ENCODE measurements at regions of chr3 and their contacts with region 1.

Region 1: GRCh38 chr3:48918388-48919214 is at the start of gene ARIH2:
- DNase-seq: peak; percentile 85
- H3K4me3 Mint-ChIP-seq: peak within 1 kb of the TSS; percentile 90
- H3K27ac Mint-ChIP-seq: peak within 1 kb of the TSS; percentile 98
- H3K4me1 Mint-ChIP-seq: peaks cover 23% of the 10 kb centered on the region
- H3K27me3 Mint-ChIP-seq: no peaks in the 10 kb centered on the region
- total RNA-seq, gene ARIH2: 156 and 163 TPM in 2 replicates

Region 2: GRCh38 chr3:48663415-48664312 is 254.9 kb before region 1 on chr3:
- intact Hi-C with region 1: loop called (anchors 5 kb)
- DNase-seq: peak; percentile 94
- H3K4me3 Mint-ChIP-seq: peak overlapping the region; percentile 90
- H3K27ac Mint-ChIP-seq: peak overlapping the region; percentile 99
- H3K4me1 Mint-ChIP-seq: peaks cover 10% of the 10 kb centered on the region
- H3K27me3 Mint-ChIP-seq: peaks cover 8% of the 10 kb centered on the region

Region 3: GRCh38 chr3:48716982-48717746 is 201.4 kb before region 1 on chr3 and contains the start of gene IP6K2:
- intact Hi-C with region 1: loop called (anchors 2 kb)
- DNase-seq: peak; percentile 98
- H3K4me3 Mint-ChIP-seq: peak within 1 kb of the TSS; percentile 98
- H3K27ac Mint-ChIP-seq: peak within 1 kb of the TSS; percentile 97
- H3K4me1 Mint-ChIP-seq: peaks cover 28% of the 10 kb centered on the region
- H3K27me3 Mint-ChIP-seq: peaks cover 13% of the 10 kb centered on the region
- total RNA-seq, gene IP6K2: 65.4 and 68.2 TPM in 2 replicates

Region 4: GRCh38 chr3:48898383-48899234 is 20.0 kb before region 1 on chr3 and contains the start of gene SLC25A20:
- intact Hi-C with region 1: loop called (anchors 1 kb)
- DNase-seq: peak; percentile 89
- H3K4me3 Mint-ChIP-seq: peak within 1 kb of the TSS; percentile 90
- H3K27ac Mint-ChIP-seq: peak within 1 kb of the TSS; percentile 94
- H3K4me1 Mint-ChIP-seq: peaks cover 33% of the 10 kb centered on the region
- H3K27me3 Mint-ChIP-seq: no peaks in the 10 kb centered on the region
- total RNA-seq, gene SLC25A20: 16.2 and 19.0 TPM in 2 replicates

Region 5: GRCh38 chr3:48989796-48990635 is 71.4 kb after region 1 on chr3 and contains the start of gene P4HTM:
- intact Hi-C with region 1: loop called (anchors 5 kb)
- DNase-seq: peak; percentile 64
- H3K4me3 Mint-ChIP-seq: peak within 1 kb of the TSS; percentile 93
- H3K27ac Mint-ChIP-seq: peak within 1 kb of the TSS; percentile 88
- H3K4me1 Mint-ChIP-seq: peaks cover 37% of the 10 kb centered on the region
- H3K27me3 Mint-ChIP-seq: no peaks in the 10 kb centered on the region
- total RNA-seq, gene P4HTM: 37.8 and 39.1 TPM in 2 replicates

Measured in activated T-helper 2 cell treated with anti-CD3 and anti-CD28 coated beads, Interferon-gamma antibody, Interleukin-2, Interleukin-4, amounts not matched to agents 10 μg/mL and 5 μg/mL and 100 μg/mL, durations not matched to agents 14 hours and 24 hours and 36 hours (primary cell).